Head of caudate nucleus (tissue), 42 donors: ENCODE measurements at regions of chr6 and their contacts with region 1.

Region 1: DNA sequence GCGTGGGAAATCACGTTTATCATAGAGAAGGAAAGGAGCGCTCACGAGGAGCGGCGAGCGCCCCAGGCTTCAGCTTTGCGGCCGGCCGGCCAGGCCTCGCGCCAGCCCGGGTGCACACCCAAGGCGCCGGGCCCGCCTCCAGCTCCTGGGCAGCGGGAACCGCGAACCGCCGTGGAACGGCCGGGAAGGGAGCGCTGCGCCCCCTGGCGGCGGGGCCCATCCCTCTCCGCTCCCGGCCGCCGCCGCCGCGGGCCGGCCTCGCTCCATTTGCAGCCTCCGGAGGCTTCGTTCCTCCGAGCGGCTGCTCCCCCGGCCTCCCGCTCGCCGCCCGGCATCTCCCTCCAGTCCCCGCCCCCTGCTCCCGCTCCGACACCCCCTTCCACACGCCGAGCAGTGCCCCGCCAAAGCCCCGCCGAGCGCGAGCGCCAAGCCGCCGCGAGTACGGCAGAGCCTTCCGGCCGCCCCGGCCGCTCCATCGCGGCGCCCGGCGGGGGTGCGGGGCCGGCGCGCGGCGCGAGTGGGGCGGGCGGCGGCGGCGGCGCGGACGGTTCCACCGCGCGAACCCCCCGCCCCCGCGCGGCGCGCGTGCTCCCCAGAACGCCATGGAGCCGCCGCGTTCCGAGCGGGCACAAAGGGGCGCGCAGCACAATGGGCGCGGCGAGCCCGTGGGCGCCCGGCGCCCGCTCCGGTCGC is 956 bp downstream of the BEND3 start:
- DNase-seq: peak; percentile 39 to 93 (median 85)

Region 2: GRCh38 chr6:107033126-107033525 is 81.2 kb before region 1 on chr6:
- intact Hi-C with region 1: loop called (anchors 2 kb)
- DNase-seq: no peak